ENCODE measurements at regions of chr4 and their contacts with region 1.

Region 1: GRCh38 chr4:97987019-97987648 is 156.1 kb downstream of the STPG2 start:
- DNase-seq: peak; percentile 26
- H3K4me3 ChIP-seq: no peak overlapping the region
- H3K27ac ChIP-seq: no peak overlapping the region
- H3K4me1 ChIP-seq: no peaks in the 10 kb centered on the region
- H3K27me3 ChIP-seq: peaks cover 1% of the 10 kb centered on the region
- CTCF ChIP-seq: peak; percentile 51 to 67

Region 2: DNA sequence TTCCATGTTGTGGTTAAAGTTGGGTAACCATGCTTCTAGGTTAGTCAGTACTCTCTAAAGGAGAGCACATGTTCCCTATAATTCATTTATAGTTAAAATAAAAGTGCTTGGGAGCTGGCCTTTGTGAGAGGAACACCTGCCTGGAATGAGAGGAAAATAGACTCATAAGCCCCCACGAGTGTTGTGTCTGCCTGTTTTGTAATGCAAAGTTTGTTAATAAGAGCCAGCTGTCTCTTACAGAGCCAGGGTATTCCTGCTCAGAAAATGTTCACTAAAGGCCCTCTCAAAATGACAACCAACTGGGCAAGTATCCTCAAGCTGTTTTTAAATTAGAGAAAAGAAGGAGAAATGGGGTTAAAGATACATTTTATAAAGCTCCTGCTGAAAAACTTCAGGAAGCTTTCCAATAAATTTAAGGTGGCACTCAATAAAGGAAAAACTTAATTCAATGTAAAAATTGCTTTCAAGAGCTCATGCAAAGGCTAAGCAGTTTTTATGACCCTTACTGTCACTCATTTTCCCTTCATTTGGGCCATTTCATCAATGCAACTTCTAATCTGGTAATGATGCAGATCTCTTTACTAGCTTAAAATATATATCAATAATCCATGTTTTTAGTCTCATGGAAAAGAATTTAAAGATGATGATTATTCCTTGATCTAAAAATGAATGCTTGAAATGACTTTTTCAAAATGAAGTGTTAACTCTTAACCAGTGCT is 637.5 kb before region 1 on chr4:
- CTCF ChIA-PET with region 1: no interaction called
- dilution Hi-C with region 1: no loop called
- in situ Hi-C with region 1: no loop called
- intact Hi-C with region 1: no loop called
- DNase-seq: no peak
- H3K4me3 ChIP-seq: no peak overlapping the region
- H3K27ac ChIP-seq: no peak overlapping the region
- H3K4me1 ChIP-seq: no peaks in the 10 kb centered on the region
- H3K27me3 ChIP-seq: peaks cover 3% of the 10 kb centered on the region
- CTCF ChIP-seq: no peak

Region 3: DNA sequence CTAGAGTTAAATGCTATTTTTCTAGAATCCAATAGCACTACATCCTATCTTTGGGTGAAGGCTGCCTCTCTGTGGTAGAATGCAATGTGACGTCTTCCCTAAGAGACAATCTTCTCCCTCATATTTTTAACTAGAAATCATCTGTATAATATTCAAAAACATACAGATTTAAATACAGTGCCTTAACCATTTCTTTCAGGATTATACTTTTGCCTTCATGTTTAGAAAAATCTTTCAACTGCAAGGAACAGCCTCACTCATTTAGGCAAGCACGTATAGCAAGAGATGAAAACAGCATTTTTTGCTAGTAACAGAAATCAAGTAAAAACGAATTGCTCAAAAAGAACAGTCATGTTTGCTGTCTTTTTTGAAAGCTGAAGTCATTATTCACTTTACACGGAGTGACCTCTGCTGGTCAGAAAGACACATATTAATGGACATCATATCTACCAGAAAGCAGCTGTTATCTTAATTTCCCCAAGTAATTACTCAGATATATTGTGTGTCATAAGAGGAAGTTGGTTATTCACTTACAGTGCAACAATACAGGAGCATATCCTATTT is 266.2 kb before region 1 on chr4:
- CTCF ChIA-PET with region 1: no interaction called
- dilution Hi-C with region 1: no loop called
- in situ Hi-C with region 1: no loop called
- intact Hi-C with region 1: loop called (anchors 5 kb)
- DNase-seq: peak; percentile 37
- H3K4me3 ChIP-seq: no peak overlapping the region
- H3K27ac ChIP-seq: no peak overlapping the region
- H3K4me1 ChIP-seq: no peaks in the 10 kb centered on the region
- H3K27me3 ChIP-seq: peaks cover 4% of the 10 kb centered on the region
- CTCF ChIP-seq: peak; percentile 18 to 45

Region 4: GRCh38 chr4:97762115-97762512 is 225.0 kb before region 1 on chr4:
- CTCF ChIA-PET with region 1: no interaction called
- dilution Hi-C with region 1: no loop called
- in situ Hi-C with region 1: loop called in 1 of 2 experiments (anchors 25 kb)
- intact Hi-C with region 1: no loop called
- DNase-seq: no peak
- H3K4me3 ChIP-seq: no peak overlapping the region
- H3K27ac ChIP-seq: no peak overlapping the region
- H3K4me1 ChIP-seq: no peaks in the 10 kb centered on the region
- H3K27me3 ChIP-seq: no peaks in the 10 kb centered on the region
- CTCF ChIP-seq: no peak

Region 5: DNA sequence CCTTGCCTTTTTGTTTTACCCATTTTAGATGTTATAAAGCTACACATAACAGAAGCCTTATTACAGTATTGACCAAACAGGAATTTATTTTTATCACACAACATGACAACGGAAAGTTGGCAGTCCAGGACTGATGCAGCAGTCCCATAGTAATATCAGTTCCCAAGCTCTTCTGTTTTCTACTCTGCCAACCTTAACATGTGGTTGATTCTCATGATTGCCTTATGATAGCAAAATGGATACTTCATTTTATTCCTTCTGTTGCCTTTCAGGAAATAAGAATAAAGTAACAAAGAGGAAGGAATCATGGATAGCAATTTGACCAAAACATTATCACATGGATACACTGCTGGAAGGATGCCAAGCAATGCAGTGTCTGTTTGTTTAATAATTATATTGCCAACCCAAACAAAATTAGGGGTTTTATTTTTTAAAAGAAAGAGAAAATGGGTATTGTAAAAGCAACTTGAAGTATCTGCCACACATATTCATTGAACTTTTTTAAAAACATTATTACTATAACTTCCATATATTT is 119.5 kb before region 1 on chr4:
- CTCF ChIA-PET with region 1: no interaction called
- dilution Hi-C with region 1: no loop called
- in situ Hi-C with region 1: no loop called
- intact Hi-C with region 1: no loop called
- DNase-seq: no peak
- H3K4me3 ChIP-seq: no peak overlapping the region
- H3K27ac ChIP-seq: no peak overlapping the region
- H3K4me1 ChIP-seq: no peaks in the 10 kb centered on the region
- H3K27me3 ChIP-seq: no peaks in the 10 kb centered on the region
- CTCF ChIP-seq: no peak

Region 6: GRCh38 chr4:97910005-97910404 is 77.1 kb before region 1 on chr4:
- CTCF ChIA-PET with region 1: no interaction called
- dilution Hi-C with region 1: no loop called
- in situ Hi-C with region 1: no loop called
- intact Hi-C with region 1: loop called (anchors 2 kb)
- DNase-seq: no peak
- H3K4me3 ChIP-seq: no peak overlapping the region
- H3K27ac ChIP-seq: no peak overlapping the region
- H3K4me1 ChIP-seq: no peaks in the 10 kb centered on the region
- H3K27me3 ChIP-seq: no peaks in the 10 kb centered on the region
- CTCF ChIP-seq: peak; percentile 32 to 59